ENCODE measurements at regions of chr3 and their contacts with region 1.

Region 1: DNA sequence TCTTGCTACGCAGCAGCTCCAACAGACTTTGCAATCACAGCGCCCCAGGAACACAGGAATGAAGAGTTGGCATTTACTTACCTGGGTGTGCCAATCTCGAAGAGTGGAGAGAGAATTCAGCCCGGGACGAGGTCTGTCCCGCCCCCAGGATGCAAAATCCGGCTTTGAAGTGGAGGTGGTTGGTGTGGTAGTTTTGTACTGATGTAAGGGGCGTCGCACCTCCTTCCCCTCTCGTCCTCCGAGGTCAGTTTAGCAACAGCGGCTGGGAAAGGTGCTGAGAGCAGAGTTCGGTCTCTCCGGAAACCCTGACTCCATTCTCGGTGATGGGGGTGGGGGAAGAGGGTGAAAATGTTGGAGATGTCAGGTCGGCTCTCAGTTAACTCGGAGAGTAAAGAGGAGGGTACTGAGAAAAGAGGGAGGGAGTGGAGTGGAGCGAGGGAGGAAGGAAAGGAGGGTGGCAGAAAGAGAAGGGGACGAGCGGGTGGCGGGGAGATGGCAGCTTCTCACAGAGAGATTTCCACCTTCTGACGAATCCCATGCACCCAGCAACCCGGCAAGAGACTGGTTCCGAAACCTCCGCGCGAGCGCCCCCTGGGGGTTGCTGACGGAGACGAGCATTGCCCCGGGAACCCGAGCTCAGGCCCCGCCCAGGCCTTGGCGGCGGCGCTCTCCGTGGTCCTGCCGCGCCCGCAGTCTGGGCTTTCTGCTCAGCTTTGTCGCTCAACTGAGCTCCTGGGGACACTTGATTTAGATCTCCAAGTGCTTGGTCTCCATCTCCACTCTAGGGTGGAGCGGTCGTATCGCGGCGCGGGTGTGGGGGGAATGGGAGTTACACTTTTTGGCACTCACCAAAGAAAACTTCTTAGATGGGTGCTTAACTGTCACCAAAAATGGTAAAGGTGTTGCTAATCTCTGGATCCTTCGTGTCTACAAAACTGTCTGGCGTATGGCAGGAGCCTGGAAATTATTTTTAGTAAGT is at the start of gene CPNE4:
- DNase-seq: no peak
- H3K4me3 ChIP-seq: no peak within 1 kb of the TSS
- H3K27me3 ChIP-seq: peaks cover 16% of the 10 kb centered on the region
- CTCF ChIP-seq: peak; percentile 92
- polyA plus RNA-seq, gene CPNE4: not detected in 2 replicates

Region 2: GRCh38 chr3:132174500-132174899 is 139.7 kb after region 1 on chr3:
- CTCF ChIA-PET with region 1: interaction called, 116 read pairs
- POLR2A ChIA-PET with region 1: no interaction called
- DNase-seq: no peak
- H3K4me3 ChIP-seq: no peak overlapping the region
- H3K27me3 ChIP-seq: 0 out of 2 replicates have a peak, but pooled peaks cover 2% of the 10 kb centered on the region
- CTCF ChIP-seq: no peak

Region 3: DNA sequence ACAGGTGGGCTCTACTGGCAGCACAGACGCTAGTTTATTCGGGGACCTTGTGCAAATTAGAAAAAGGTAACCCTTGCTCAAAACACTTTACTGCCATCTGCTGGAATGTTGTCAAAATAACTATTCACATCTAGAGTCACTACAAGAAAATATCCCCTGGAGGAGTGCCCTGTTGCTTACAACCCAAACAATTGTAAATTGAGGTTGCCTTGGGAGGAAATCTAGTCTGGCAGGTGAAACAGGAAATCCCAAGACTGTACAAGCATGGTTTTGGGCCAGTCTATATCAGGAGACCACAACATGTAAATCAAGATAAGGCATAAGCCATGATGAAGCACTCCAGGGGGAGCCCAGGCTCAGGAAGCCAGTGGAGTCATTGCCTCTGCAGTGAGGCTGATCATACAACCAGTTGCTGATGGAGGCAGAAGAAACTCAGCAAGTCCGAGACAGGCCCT is 145.6 kb after region 1 on chr3:
- CTCF ChIA-PET with region 1: interaction called, 116 read pairs
- POLR2A ChIA-PET with region 1: no interaction called
- DNase-seq: no peak
- H3K4me3 ChIP-seq: no peak overlapping the region
- H3K27me3 ChIP-seq: no peaks in the 10 kb centered on the region
- CTCF ChIP-seq: peak; percentile 59

Region 4: DNA sequence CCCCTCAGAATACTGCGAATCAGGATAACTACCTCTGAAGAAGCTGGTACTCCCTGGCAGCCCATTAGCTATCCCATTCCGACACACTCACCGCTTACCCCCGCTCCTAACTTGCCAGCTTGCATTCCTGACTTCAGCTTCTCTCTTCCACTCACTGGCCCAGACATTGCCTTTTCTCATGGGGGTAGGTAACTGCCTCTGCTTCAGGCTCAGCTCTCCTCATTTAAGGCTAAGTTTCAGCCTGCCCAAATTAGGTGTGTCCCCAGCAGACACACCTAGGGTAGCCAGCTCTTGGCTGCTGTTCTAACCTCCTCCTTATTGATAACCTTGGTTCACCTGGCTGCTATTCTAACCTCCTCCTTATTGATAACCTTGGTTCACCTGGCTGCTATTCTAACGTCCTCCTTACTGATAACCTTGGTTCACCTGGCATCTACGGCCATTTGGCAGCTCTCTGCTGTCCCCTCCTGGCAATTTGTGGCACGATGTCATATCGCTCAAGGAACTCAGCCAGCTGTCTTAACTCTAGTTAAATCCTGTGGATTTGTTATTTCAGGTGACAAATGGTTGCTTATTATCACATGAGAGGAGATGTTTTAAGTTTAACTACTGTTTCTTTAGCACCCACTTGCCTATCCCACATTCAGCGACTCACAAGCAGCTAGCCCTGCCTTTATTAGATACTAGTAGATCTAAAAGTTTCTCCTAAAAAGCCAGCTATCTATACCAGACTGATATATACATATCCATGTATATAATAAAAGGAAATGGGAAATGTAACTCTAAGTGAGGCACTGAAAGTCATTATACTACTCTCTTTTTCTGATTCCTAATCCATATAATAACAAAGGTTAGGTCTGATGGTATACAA is 175.9 kb after region 1 on chr3:
- CTCF ChIA-PET with region 1: interaction called, 13 read pairs
- POLR2A ChIA-PET with region 1: no interaction called
- DNase-seq: no peak
- H3K4me3 ChIP-seq: no peak overlapping the region
- H3K27me3 ChIP-seq: no peaks in the 10 kb centered on the region
- CTCF ChIP-seq: peak; percentile 41

Measured in BJ (cell line).